ENCODE measurements at regions of chr11 and their contacts with region 1.

Region 1: GRCh38 chr11:111635706-111636045 is 33.4 kb downstream of the SIK2 start:
- DNase-seq: peak; percentile 28 to 60 (median 52)
- ATAC-seq: peak; percentile 49
- H3K4me3 ChIP-seq: no peak overlapping the region
- H3K27ac ChIP-seq: peak overlapping the region in 3 of 4 donors; percentile 32 to 78 (median 38)
- H3K4me1 ChIP-seq: peaks cover 34% of the 10 kb centered on the region
- H3K27me3 ChIP-seq: no peaks in the 10 kb centered on the region
- CTCF ChIP-seq: no peak
- POLR2A ChIP-seq: no peak

Region 2: GRCh38 chr11:111526501-111526900 is 109.2 kb before region 1 on chr11:
- intact Hi-C with region 1: no loop called
- DNase-seq: no peak
- ATAC-seq: no peak
- H3K4me3 ChIP-seq: no peak overlapping the region
- H3K27ac ChIP-seq: no peak overlapping the region
- H3K4me1 ChIP-seq: no peaks in the 10 kb centered on the region
- H3K27me3 ChIP-seq: no peaks in the 10 kb centered on the region
- CTCF ChIP-seq: no peak
- POLR2A ChIP-seq: no peak

Region 3: DNA sequence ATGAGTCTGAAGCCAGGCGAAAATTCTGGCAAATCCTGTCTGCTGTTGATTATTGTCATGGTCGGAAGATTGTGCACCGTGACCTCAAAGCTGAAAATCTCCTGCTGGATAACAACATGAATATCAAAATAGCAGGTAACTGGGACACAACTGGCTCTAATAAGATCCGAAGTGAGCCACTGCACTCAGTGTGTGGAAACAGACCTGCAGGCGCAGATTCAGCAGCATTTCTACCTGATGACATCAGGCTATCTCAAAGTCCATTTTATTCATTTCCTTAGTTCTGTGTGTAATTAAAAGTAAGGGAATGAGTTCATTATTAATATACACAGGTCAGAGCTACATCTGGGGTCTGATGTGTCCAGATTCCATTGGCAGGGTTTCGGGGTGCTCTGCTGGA is 52.4 kb after region 1 on chr11:
- intact Hi-C with region 1: loop called (anchors 10 kb)
- DNase-seq: peak in 1 of 4 donors; percentile 19
- ATAC-seq: no peak
- H3K4me3 ChIP-seq: no peak overlapping the region
- H3K27ac ChIP-seq: peak overlapping the region in 2 of 4 donors; percentile 15 to 36
- H3K4me1 ChIP-seq: peaks cover 12% of the 10 kb centered on the region
- H3K27me3 ChIP-seq: no peaks in the 10 kb centered on the region
- CTCF ChIP-seq: no peak
- POLR2A ChIP-seq: no peak